Activated T-helper 2 cell treated with anti-CD3 and anti-CD28 coated beads, Interferon-gamma antibody, Interleukin-2, Interleukin-4, amounts not matched to agents 10 μg/mL and 5 μg/mL and 100 μg/mL, durations not matched to agents 14 hours and 24 hours and 36 hours (primary cell): ENCODE measurements at regions of chr13 and their contacts with region 1.

Region 1: DNA sequence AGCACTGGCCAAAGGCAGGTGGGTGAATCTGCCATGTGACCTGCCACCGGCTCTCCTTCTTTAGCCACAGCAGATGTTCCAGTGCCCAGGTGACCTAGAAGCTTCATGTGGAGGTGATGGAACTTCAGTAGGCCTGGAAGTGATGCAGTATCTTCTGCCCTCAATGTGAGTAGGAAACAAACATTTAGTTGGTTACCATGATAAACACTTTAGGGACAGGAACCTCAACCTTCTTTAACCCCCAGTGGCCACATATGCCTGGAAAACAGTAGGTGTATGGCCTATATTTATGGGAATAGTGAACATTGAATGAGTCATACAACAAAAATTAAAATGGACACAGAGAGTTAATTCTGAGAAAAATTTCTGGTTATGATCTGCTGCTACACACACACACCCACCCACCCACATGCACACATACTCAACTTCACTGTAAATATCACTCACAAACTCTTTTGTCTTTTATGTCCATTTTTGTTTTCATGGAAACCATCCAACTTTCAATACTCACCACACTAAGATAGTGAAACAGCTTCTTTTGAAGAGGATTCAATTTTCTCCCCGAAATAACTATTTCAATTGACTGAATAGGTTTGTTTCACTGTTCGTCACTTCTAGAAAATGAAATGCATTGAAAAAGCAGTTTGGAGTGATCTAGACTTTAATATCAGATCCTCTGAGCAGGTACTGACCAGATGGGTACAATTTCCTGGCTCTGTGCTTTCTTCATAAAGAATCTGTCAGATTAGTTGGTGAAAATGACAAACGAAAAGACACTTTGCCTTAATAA is 97.3 kb downstream of the STARD13 start:
- DNase-seq: no peak
- H3K4me3 Mint-ChIP-seq: no peak overlapping the region
- H3K27ac Mint-ChIP-seq: peak overlapping the region; percentile 97
- H3K4me1 Mint-ChIP-seq: peaks cover 30% of the 10 kb centered on the region
- H3K27me3 Mint-ChIP-seq: no peaks in the 10 kb centered on the region

Region 2: GRCh38 chr13:32347651-32348050 is 840.6 kb before region 1 on chr13:
- intact Hi-C with region 1: no loop called
- DNase-seq: no peak
- H3K4me3 Mint-ChIP-seq: no peak overlapping the region
- H3K27ac Mint-ChIP-seq: peak overlapping the region; percentile 79
- H3K4me1 Mint-ChIP-seq: peaks cover 20% of the 10 kb centered on the region
- H3K27me3 Mint-ChIP-seq: no peaks in the 10 kb centered on the region

Region 3: DNA sequence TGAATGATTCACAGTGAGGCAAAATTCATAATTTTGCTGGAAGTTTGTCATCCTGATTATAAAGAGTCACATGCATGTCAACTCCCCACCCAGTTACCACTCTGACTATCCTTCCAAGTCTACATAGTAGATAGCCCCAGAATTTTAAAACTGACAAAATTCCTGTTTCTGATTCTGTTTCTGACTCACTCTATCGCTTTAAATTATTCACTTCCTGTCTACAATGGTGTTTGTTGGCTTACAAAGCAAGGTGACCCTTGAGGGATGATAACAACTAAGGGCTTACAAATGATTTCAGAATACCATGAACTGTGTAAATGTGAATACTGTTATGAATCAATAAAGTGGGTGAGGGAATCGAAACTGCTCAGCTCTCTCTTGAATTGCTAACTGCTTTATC is 270.8 kb before region 1 on chr13:
- intact Hi-C with region 1: loop called (anchors 1 kb)
- DNase-seq: no peak
- H3K4me3 Mint-ChIP-seq: no peak overlapping the region
- H3K27ac Mint-ChIP-seq: peak overlapping the region; percentile 53
- H3K4me1 Mint-ChIP-seq: peaks cover 26% of the 10 kb centered on the region
- H3K27me3 Mint-ChIP-seq: no peaks in the 10 kb centered on the region

Region 4: GRCh38 chr13:33017323-33017929 is 170.9 kb before region 1 on chr13:
- intact Hi-C with region 1: loop called (anchors 10 kb)
- DNase-seq: peak; percentile 28
- H3K4me3 Mint-ChIP-seq: peak overlapping the region; percentile 62
- H3K27ac Mint-ChIP-seq: peak overlapping the region; percentile 36
- H3K4me1 Mint-ChIP-seq: peaks cover 20% of the 10 kb centered on the region
- H3K27me3 Mint-ChIP-seq: peaks cover 62% of the 10 kb centered on the region

Region 5: DNA sequence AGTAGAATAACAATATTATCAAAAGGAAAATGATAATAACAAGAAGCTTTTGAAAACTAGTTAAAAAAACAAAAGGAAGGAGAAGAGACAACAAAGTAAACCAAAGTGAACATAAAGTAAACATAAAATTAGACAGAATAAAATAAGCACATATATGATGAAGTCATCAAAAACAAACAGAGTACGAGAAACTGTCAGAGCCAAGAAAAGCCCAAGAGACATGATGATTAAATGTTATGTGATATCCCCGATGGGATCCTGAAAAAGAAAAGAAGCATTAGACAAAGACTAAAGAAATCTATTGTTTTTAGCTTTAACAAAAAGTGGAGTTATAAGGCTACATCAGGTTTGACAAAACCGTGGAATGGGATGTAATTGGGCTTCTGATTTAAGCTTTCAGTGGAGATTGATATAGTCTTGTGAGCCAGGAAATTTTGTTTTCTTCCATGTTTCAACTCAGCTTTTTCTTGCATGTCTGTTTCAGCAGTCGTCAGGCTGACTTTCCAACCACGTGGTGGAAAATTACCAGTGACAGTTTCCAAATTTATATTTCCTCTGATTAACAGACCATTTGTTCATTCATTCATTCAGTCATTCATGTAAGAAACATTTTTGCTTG is 107.2 kb before region 1 on chr13:
- intact Hi-C with region 1: loop called (anchors 1 kb)
- DNase-seq: no peak
- H3K4me3 Mint-ChIP-seq: no peak overlapping the region
- H3K27ac Mint-ChIP-seq: no peak overlapping the region
- H3K4me1 Mint-ChIP-seq: peaks cover 5% of the 10 kb centered on the region
- H3K27me3 Mint-ChIP-seq: no peaks in the 10 kb centered on the region

Region 6: GRCh38 chr13:33146843-33147611 is 41.3 kb before region 1 on chr13:
- intact Hi-C with region 1: loop called (anchors 2 kb)
- DNase-seq: no peak
- H3K4me3 Mint-ChIP-seq: no peak overlapping the region
- H3K27ac Mint-ChIP-seq: peak overlapping the region; percentile 74
- H3K4me1 Mint-ChIP-seq: peaks cover 15% of the 10 kb centered on the region
- H3K27me3 Mint-ChIP-seq: no peaks in the 10 kb centered on the region

Region 7: DNA sequence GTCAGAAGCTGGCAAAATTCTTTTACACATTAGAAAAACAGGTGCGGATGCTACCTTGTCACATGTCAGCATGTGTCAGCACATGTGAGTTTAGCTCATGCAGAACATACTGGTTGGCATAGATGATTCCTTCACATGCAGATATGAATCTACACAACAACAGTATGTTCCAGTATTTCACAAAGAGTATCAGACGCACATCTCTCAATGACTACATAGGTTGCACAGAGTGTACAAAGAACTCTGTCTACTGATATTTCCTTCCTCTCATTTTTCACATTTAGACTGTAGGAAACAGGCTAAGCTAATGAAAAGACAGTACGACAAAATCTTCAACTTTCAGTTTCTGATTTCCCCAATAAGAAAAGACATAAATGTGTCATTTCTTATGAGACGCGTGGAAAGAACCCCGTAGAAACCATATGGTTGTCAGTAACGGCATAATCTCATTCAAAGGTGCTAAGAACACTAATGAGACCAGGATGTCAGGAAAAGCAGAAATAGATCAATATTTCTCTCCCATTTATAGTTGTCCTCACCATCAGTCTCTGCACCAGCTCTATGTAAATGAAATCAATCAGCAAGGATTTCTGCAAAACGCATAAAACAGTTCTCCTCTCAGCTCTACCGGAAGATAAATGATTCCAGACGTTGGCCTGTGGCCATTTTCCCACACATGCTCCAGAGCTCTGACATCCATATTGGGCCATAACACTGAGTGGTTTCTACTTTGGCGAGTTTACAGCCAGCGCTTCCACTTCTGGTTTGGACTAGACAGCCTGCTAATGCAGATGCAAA is 16.0 kb after region 1 on chr13:
- intact Hi-C with region 1: loop called (anchors 1 kb)
- DNase-seq: no peak
- H3K4me3 Mint-ChIP-seq: peak overlapping the region; percentile 66
- H3K27ac Mint-ChIP-seq: peak overlapping the region; percentile 76
- H3K4me1 Mint-ChIP-seq: peaks cover 45% of the 10 kb centered on the region
- H3K27me3 Mint-ChIP-seq: no peaks in the 10 kb centered on the region